WTC11 (cell line): ENCODE measurements at regions of chr18 and their contacts with region 1.

Region 1: GRCh38 chr18:574865-575645 is 5.1 kb upstream of the CETN1 start:
- DNase-seq: no peak
- ATAC-seq: peak; percentile 83
- H3K4me3 Mint-ChIP-seq: no peak overlapping the region
- H3K27ac Mint-ChIP-seq: peak overlapping the region; percentile 50
- H3K4me1 Mint-ChIP-seq: peaks cover 48% of the 10 kb centered on the region
- H3K27me3 Mint-ChIP-seq: peaks cover 7% of the 10 kb centered on the region
- CTCF ChIP-seq: no peak

Region 2: DNA sequence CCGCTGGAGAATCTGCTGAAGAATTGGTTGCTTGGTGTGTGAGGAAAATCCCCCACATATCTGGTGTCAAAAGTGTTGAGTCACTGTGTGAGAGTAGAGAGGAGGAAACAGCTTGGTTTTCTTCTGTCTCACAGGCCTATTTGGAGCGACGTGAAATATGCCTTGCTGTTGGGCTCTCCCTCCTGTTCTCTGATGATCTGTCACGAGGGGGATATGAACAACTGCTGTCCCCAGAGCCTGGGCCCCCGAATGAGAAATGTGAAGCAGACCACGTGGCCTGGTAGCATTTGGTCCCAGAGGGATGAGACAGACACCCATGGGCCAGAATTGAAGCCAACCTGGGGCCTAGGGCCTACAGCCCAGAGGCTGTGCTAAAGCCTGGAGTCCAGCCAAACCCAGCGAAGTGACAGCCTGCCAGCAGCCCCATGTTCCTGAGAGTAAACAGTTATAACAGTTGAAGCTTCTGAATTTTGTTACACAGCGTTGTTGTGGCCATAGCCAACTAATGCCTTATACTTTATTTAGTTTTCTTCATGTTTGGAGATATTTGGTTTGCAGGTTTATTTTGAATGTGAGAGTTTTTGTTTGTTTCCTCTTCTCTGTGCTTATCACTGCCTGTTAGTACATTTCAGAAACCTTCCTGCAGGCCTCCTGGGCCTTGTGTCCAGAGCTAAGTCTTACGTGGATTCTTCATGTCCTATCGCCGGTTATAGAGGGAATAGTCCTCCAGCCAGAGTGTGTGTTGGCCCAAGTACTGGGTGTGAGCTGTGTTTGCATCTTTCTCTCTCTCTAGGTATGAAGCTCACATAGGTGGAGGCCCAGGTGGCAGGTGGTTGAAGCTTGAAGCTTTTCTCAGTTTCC is 55.8 kb before region 1 on chr18:
- CTCF ChIA-PET with region 1: no interaction called
- POLR2A ChIA-PET with region 1: no interaction called
- DNase-seq: no peak
- ATAC-seq: no peak
- H3K4me3 Mint-ChIP-seq: no peak overlapping the region
- H3K27ac Mint-ChIP-seq: 0 out of 2 replicates have a peak overlapping the region, but pooled peaks have one; percentile 10
- H3K4me1 Mint-ChIP-seq: peaks cover 26% of the 10 kb centered on the region
- H3K27me3 Mint-ChIP-seq: peaks cover under 1% of the 10 kb centered on the region; the same call in 1 of the 2 replicates
- CTCF ChIP-seq: no peak

Region 3: GRCh38 chr18:596288-596881 is 21.3 kb after region 1 on chr18:
- CTCF ChIA-PET with region 1: interaction called, 11 read pairs
- POLR2A ChIA-PET with region 1: no interaction called
- DNase-seq: peak; percentile 77
- ATAC-seq: peak; percentile 78
- H3K4me3 Mint-ChIP-seq: peak overlapping the region; percentile 63
- H3K27ac Mint-ChIP-seq: peak overlapping the region; percentile 70
- H3K4me1 Mint-ChIP-seq: peaks cover 9% of the 10 kb centered on the region
- H3K27me3 Mint-ChIP-seq: peaks cover 24% of the 10 kb centered on the region
- CTCF ChIP-seq: no peak; the same call in 1 of the 2 replicates

Region 4: GRCh38 chr18:658001-658946 is 83.2 kb after region 1 on chr18:
- CTCF ChIA-PET with region 1: no interaction called
- POLR2A ChIA-PET with region 1: no interaction called
- DNase-seq: peak; percentile 90
- ATAC-seq: peak; percentile 80
- H3K4me3 Mint-ChIP-seq: peak overlapping the region; percentile 88
- H3K27ac Mint-ChIP-seq: peak overlapping the region; percentile 76
- H3K4me1 Mint-ChIP-seq: peaks cover 40% of the 10 kb centered on the region
- H3K27me3 Mint-ChIP-seq: no peaks in the 10 kb centered on the region
- CTCF ChIP-seq: no peak